Heart left ventricle (tissue), 16 donors: ENCODE measurements at regions of chr3 and their contacts with region 1.

Region 1: DNA sequence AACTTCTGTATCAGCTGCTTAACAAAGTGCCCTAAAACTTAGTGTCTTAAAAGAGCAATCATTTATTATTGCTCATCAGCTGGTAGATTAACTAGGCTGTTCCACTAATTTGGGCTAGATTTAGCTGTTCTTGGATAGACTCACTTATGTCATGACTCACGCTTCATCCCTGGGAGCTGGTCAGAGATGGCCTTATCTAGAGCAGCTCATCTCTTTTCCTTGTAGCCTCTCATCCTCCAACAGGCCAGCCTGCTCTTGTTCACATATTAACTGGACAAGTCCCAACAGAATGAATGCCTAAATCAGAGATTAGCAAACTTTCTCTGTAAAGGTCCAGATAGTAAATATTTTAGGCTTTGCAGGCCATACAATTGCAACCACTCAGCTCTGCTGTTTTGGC is 66.9 kb upstream of the PLAAT1 start:
- DNase-seq: no peak
- ATAC-seq: no peak
- H3K4me3 ChIP-seq: no peak overlapping the region
- H3K27ac ChIP-seq: no peak overlapping the region
- H3K4me1 ChIP-seq: no peaks in the 10 kb centered on the region
- H3K27me3 ChIP-seq: no peaks in the 10 kb centered on the region
- CTCF ChIP-seq: no peak
- POLR2A ChIP-seq: no peak

Region 2: DNA sequence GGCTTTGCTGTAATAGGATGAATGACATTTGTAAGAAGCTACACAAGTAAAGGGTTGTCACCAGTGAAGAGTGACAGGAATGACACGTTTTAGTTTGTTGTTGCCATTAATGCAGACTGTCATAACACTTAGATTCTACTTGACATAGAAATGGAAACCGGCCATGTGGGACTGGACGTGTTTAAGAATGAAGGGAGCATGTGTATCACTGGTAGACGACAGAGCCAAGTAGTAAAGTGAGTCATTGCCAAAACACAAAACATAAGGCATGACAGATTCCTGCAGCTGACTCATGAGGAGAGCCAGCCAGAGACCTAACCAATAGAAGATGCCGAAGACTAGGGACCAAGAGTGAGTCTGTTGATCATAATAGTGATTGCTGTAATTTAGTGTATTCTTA is 39.3 kb before region 1 on chr3:
- intact Hi-C with region 1: loop called in 1 of 10 experiments (anchors 2 kb)
- DNase-seq: no peak
- ATAC-seq: peak in 3 of 4 donors; percentile 84 to 98 (median 90)
- H3K4me3 ChIP-seq: no peak overlapping the region
- H3K27ac ChIP-seq: no peak overlapping the region
- H3K4me1 ChIP-seq: no peaks in the 10 kb centered on the region
- H3K27me3 ChIP-seq: no peaks in the 10 kb centered on the region
- CTCF ChIP-seq: no peak
- POLR2A ChIP-seq: no peak